Endothelial cell of umbilical vein (primary cell): ENCODE measurements at regions of chr15 and their contacts with region 1.

Region 1: DNA sequence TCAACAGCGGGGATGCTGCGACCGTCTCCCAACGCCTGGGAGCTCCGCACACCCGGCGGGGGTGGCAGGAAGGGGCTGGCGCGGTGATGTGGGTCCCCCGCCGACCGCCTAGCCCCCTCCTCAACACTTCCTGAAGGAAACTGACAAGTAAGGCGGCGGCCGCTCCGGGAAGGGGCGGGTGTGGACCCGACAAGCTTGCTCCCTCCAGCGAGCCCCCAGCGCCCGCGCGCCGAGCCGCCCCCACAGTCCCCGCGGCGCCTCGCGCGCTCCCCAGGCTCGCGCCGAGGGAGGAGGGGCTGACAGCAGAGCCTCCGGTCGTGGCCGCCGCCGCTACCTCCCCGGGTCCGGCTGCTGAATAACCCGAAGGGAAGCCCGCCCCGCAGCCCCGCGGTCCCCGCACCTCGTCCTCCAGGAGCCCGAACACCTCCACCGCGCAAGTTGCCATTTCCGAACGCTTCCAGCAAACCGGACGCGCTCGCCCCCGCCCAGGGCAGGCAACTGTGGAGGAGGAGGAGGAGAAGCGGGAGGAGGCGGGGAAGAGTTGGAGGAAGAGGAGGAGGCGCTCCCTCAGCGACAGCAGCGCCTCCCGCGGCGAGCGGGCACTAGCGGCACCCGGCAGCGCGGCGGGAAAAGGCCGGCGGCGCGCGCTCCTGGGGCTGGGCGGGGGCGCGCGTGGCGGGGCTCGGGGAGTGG is at the start of gene NEDD4:
- DNase-seq: peak; percentile 92
- H3K4me3 ChIP-seq: peak within 1 kb of the TSS; percentile 79 to 97 (median 93)
- H3K27ac ChIP-seq: peak within 1 kb of the TSS; percentile 68
- H3K4me1 ChIP-seq: peaks cover 20% of the 10 kb centered on the region
- H3K27me3 ChIP-seq: no peaks in the 10 kb centered on the region
- CTCF ChIP-seq: peak; percentile 35 to 76
- POLR2A ChIP-seq: peak; percentile 75
- total RNA-seq, gene NEDD4: 34.2 and 39.0 TPM in 2 replicates

Region 2: DNA sequence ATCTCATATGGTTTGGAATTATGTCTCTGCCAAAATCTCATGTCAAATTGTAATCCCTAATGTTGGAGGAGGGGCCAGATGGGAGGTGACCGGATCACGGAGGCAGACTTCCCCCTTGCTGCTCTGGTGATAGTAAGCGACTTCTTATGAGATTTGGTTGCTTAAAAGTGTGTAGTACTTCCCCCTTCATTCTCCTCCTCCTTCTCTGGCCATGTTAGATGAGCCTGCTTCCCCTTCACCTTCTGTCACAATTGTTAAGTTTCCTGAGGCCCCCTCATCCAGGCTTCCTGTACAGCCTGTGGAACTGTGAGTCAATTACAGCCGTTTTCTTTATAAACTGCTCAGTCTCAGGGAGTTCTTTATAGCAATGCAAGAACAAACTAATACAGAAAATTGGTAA is 50.9 kb before region 1 on chr15:
- CTCF ChIA-PET with region 1: interaction called, 3 read pairs
- POLR2A ChIA-PET with region 1: no interaction called
- dilution Hi-C with region 1: no loop called
- intact Hi-C with region 1: loop called (anchors 2 kb)
- DNase-seq: peak; percentile 84
- H3K4me3 ChIP-seq: peak overlapping the region in 1 of 3 experiments; percentile 42
- H3K27ac ChIP-seq: peak overlapping the region; percentile 84
- H3K4me1 ChIP-seq: peaks cover 23% of the 10 kb centered on the region
- H3K27me3 ChIP-seq: no peaks in the 10 kb centered on the region
- CTCF ChIP-seq: no peak
- POLR2A ChIP-seq: no peak

Region 3: GRCh38 chr15:56040081-56041035 is 47.1 kb after region 1 on chr15:
- CTCF ChIA-PET with region 1: interaction called, 3 read pairs
- POLR2A ChIA-PET with region 1: no interaction called
- dilution Hi-C with region 1: no loop called
- intact Hi-C with region 1: loop called (anchors 1 kb)
- DNase-seq: peak; percentile 92
- H3K4me3 ChIP-seq: no peak overlapping the region
- H3K27ac ChIP-seq: peak overlapping the region; percentile 88
- H3K4me1 ChIP-seq: peaks cover 23% of the 10 kb centered on the region
- H3K27me3 ChIP-seq: no peaks in the 10 kb centered on the region
- CTCF ChIP-seq: no peak
- POLR2A ChIP-seq: no peak

Region 4: GRCh38 chr15:56052395-56053045 is 59.3 kb after region 1 on chr15:
- CTCF ChIA-PET with region 1: interaction called, 45 read pairs
- POLR2A ChIA-PET with region 1: interaction called, 3 read pairs
- dilution Hi-C with region 1: no loop called
- intact Hi-C with region 1: loop called (anchors 1 kb)
- DNase-seq: peak; percentile 56
- H3K4me3 ChIP-seq: no peak overlapping the region
- H3K27ac ChIP-seq: no peak overlapping the region
- H3K4me1 ChIP-seq: peaks cover 3% of the 10 kb centered on the region
- H3K27me3 ChIP-seq: no peaks in the 10 kb centered on the region
- CTCF ChIP-seq: peak; percentile 40 to 60
- POLR2A ChIP-seq: no peak

Region 5: DNA sequence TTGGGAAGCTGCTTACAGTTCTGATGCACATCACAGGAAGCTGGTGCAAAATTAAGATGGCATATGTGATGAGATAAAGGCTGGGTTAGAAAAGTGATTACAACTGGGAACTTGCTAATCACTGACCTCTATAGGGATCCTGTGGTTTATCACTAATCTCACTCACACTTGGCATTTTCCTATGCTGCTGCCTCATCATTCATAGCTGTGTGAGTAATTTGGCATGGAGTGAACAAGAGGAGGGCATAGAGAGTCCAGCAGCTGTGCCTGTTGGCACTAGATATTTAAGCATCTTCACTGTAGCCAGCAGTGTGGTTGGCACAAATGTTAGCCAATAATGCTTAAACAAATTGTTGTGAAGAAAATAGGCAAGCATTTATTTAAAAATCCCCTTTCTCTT is 1165.3 kb after region 1 on chr15:
- CTCF ChIA-PET with region 1: no interaction called
- POLR2A ChIA-PET with region 1: no interaction called
- dilution Hi-C with region 1: no loop called
- intact Hi-C with region 1: no loop called
- DNase-seq: peak; percentile 78
- H3K4me3 ChIP-seq: no peak overlapping the region
- H3K27ac ChIP-seq: no peak overlapping the region
- H3K4me1 ChIP-seq: peaks cover 6% of the 10 kb centered on the region
- H3K27me3 ChIP-seq: no peaks in the 10 kb centered on the region
- CTCF ChIP-seq: no peak
- POLR2A ChIP-seq: no peak